Endothelial cell of umbilical vein (primary cell): ENCODE measurements at regions of chr1 and their contacts with region 1.

Region 1: GRCh38 chr1:186722711-186723309 is 42.6 kb upstream of the PTGS2 start:
- DNase-seq: peak; percentile 52
- H3K4me3 ChIP-seq: no peak overlapping the region
- H3K27ac ChIP-seq: no peak overlapping the region
- H3K4me1 ChIP-seq: no peaks in the 10 kb centered on the region
- H3K27me3 ChIP-seq: no peaks in the 10 kb centered on the region
- CTCF ChIP-seq: peak; percentile 55 to 56
- POLR2A ChIP-seq: no peak

Region 2: DNA sequence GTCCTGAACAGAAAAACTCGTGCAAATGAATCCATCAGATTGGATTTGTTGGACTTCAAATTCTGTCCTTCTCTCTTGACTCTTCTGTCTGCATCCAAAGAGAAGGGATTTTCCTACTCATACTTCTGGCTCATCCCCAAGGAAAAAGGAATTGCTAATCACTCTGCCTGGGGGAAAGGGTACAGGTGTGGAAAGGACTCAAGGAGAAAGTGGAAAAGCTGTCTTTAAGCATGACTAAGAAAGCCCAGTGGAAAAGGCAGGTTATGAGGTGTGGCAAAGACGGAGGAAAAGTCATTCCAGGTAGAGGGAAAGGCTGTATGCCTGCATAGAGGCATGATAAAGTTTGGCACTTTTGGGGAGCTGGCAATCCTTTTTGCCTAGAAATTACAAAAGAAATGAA is 86.0 kb before region 1 on chr1:
- CTCF ChIA-PET with region 1: no interaction called
- POLR2A ChIA-PET with region 1: no interaction called
- dilution Hi-C with region 1: no loop called
- intact Hi-C with region 1: no loop called
- DNase-seq: no peak
- H3K4me3 ChIP-seq: no peak overlapping the region
- H3K27ac ChIP-seq: no peak overlapping the region
- H3K4me1 ChIP-seq: peaks cover 9% of the 10 kb centered on the region
- H3K27me3 ChIP-seq: no peaks in the 10 kb centered on the region
- CTCF ChIP-seq: no peak
- POLR2A ChIP-seq: no peak

Region 3: GRCh38 chr1:186738926-186739325 is 16.1 kb after region 1 on chr1:
- CTCF ChIA-PET with region 1: interaction called, 11 read pairs
- POLR2A ChIA-PET with region 1: no interaction called
- dilution Hi-C with region 1: no loop called
- intact Hi-C with region 1: no loop called
- DNase-seq: no peak
- H3K4me3 ChIP-seq: no peak overlapping the region
- H3K27ac ChIP-seq: no peak overlapping the region
- H3K4me1 ChIP-seq: no peaks in the 10 kb centered on the region
- H3K27me3 ChIP-seq: no peaks in the 10 kb centered on the region
- CTCF ChIP-seq: no peak
- POLR2A ChIP-seq: no peak

Region 4: DNA sequence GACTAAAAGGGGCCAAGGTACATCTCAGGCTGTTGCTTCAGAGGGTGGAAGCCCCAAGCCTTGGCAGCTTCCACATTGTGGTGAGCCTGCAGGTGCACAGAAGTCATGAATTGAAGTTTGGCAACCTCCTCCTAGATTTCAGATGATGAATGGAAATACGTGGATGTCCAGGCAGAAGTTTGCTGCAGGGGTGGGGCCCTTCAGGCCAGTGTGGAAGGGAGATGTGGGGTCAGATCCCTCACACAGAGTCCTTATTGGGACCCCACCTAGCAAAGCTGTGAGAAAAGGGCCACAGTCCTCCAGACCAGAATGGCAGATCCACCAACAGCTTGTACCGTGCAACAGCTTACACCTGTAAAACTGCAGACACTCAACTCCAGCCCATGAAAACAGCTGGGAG is 24.9 kb after region 1 on chr1:
- CTCF ChIA-PET with region 1: interaction called, 10 read pairs
- POLR2A ChIA-PET with region 1: no interaction called
- dilution Hi-C with region 1: no loop called
- intact Hi-C with region 1: no loop called
- DNase-seq: no peak
- H3K4me3 ChIP-seq: no peak overlapping the region
- H3K27ac ChIP-seq: no peak overlapping the region
- H3K4me1 ChIP-seq: no peaks in the 10 kb centered on the region
- H3K27me3 ChIP-seq: no peaks in the 10 kb centered on the region
- CTCF ChIP-seq: no peak
- POLR2A ChIP-seq: no peak

Region 5: GRCh38 chr1:186806477-186806876 is 83.7 kb after region 1 on chr1:
- CTCF ChIA-PET with region 1: interaction called, 14 read pairs
- POLR2A ChIA-PET with region 1: no interaction called
- dilution Hi-C with region 1: no loop called
- intact Hi-C with region 1: no loop called
- DNase-seq: peak; percentile 73
- H3K4me3 ChIP-seq: no peak overlapping the region
- H3K27ac ChIP-seq: no peak overlapping the region
- H3K4me1 ChIP-seq: no peaks in the 10 kb centered on the region
- H3K27me3 ChIP-seq: no peaks in the 10 kb centered on the region
- CTCF ChIP-seq: peak; percentile 32 to 49
- POLR2A ChIP-seq: no peak